ENCODE measurements at regions of chr9 and their contacts with region 1.

Region 1: GRCh38 chr9:16221366-16221765 is 649.1 kb downstream of the BNC2 start:
- DNase-seq: peak in 1 of 2 donors; percentile 25
- ATAC-seq: no peak
- H3K4me3 ChIP-seq: no peak overlapping the region
- H3K27ac ChIP-seq: no peak overlapping the region
- H3K4me1 ChIP-seq: no peaks in the 10 kb centered on the region
- H3K27me3 ChIP-seq: no peaks in the 10 kb centered on the region
- CTCF ChIP-seq: no peak
- POLR2A ChIP-seq: no peak

Region 2: DNA sequence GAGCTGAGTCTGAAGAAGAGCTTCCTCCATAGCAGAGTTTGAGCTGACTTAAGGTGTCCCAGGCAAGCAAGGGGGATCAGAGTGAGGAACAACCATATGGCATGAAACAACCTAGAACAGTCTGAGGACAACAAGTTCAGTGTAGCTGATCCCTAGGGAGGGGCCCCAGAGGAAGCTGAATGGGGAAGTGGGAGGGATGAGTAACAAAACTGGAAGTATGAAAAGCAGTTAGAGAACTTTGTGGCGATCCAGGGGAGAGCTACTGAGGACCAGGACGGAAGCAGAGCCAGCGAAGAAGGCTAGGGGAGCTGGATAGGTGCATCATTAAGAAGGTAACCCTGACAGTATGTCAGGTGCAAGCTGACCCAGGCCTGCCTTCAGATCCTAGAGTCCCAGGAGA is 68.3 kb after region 1 on chr9:
- in situ Hi-C with region 1: loop called in 1 of 4 experiments (anchors 10 kb)
- intact Hi-C with region 1: no loop called
- DNase-seq: peak in 1 of 2 donors; percentile 28
- ATAC-seq: peak; percentile 36 to 56
- H3K4me3 ChIP-seq: no peak overlapping the region
- H3K27ac ChIP-seq: no peak overlapping the region
- H3K4me1 ChIP-seq: no peaks in the 10 kb centered on the region
- H3K27me3 ChIP-seq: no peaks in the 10 kb centered on the region
- CTCF ChIP-seq: no peak
- POLR2A ChIP-seq: no peak

Measured in gastrocnemius medialis (tissue), 4 donors.